A549 (cell line): ENCODE measurements at regions of chr19 and their contacts with region 1.

Region 1: DNA sequence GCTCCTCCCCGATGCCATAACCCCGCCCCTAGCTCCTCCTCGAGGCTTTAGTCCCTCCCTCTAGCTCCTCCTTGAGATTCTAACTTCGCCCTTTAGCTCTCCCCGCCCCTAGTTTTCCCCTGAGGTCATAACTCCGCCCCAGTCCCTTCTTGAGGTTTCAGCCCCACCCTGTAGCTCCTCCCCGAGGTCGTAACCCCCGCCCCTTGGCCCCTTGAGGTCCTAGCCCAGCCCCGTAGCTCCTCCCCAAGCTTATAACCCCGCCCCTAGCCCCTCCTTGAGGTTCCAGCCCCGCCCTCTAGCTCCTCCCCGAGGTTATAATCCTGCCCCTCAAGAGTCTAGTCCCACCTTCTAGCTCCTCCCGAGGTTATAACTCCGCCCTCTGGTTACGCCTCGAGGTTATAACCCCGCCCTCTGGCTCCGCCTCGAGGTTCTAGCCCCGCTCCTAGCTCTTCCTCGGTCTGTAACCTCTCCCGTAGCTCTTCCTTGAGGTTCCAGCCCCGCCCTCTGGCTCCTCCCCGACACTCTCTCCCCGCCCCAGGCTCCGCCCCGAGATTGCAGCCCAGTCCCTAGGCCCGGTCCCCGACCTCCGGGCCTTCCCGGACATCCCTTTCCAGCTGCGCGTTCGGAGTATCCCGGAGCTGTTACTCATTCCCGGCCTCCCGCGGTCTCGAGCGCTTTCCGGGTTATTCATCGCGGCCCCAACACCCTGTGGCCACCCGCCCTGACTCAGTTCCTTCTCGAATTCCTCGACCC is 1.4 kb downstream of the PLAUR start:
- DNase-seq: peak; percentile 99 to 100
- ATAC-seq: peak; percentile 87 to 95
- H3K4me3 ChIP-seq: peak overlapping the region; percentile 58
- H3K27ac ChIP-seq: peak overlapping the region; percentile 81 to 87
- H3K4me1 ChIP-seq: peaks cover 22% of the 10 kb centered on the region
- CTCF ChIP-seq: no peak
- EP300 ChIP-seq: no peak
- POLR2A ChIP-seq: peak; percentile 76
- RAD21 ChIP-seq: no peak

Region 2: GRCh38 chr19:43395561-43395960 is 273.0 kb before region 1 on chr19:
- CTCF ChIA-PET with region 1: no interaction called
- POLR2A ChIA-PET with region 1: no interaction called
- DNase-seq: no peak
- ATAC-seq: peak in 1 of 2 experiments; percentile 30; a peak in 3 of 6 replicates
- H3K4me3 ChIP-seq: no peak overlapping the region
- H3K27ac ChIP-seq: no peak overlapping the region
- H3K4me1 ChIP-seq: no peaks in the 10 kb centered on the region
- CTCF ChIP-seq: no peak
- EP300 ChIP-seq: no peak
- POLR2A ChIP-seq: no peak
- RAD21 ChIP-seq: no peak

Region 3: GRCh38 chr19:43618921-43619261 is 49.7 kb before region 1 on chr19:
- CTCF ChIA-PET with region 1: no interaction called
- POLR2A ChIA-PET with region 1: interaction called, 10 read pairs
- DNase-seq: peak; percentile 53 to 62
- ATAC-seq: peak; percentile 54 to 66
- H3K4me3 ChIP-seq: peak overlapping the region; percentile 65
- H3K27ac ChIP-seq: peak overlapping the region; percentile 86 to 94
- H3K4me1 ChIP-seq: peaks cover 12% of the 10 kb centered on the region
- CTCF ChIP-seq: no peak
- EP300 ChIP-seq: no peak
- POLR2A ChIP-seq: no peak
- RAD21 ChIP-seq: no peak

Region 4: GRCh38 chr19:43631491-43631890 is 37.1 kb before region 1 on chr19:
- CTCF ChIA-PET with region 1: no interaction called
- POLR2A ChIA-PET with region 1: no interaction called
- DNase-seq: no peak
- ATAC-seq: no peak
- H3K4me3 ChIP-seq: no peak overlapping the region
- H3K27ac ChIP-seq: no peak overlapping the region
- H3K4me1 ChIP-seq: peaks cover 24% of the 10 kb centered on the region
- CTCF ChIP-seq: no peak
- EP300 ChIP-seq: no peak
- POLR2A ChIP-seq: no peak
- RAD21 ChIP-seq: no peak

Region 5: GRCh38 chr19:43738780-43739211 is 70.2 kb after region 1 on chr19:
- CTCF ChIA-PET with region 1: interaction called, 18 read pairs
- POLR2A ChIA-PET with region 1: interaction called, 9 read pairs
- DNase-seq: peak in 1 of 2 experiments; percentile 45
- ATAC-seq: peak in 1 of 2 experiments; percentile 71; a peak in 3 of 6 replicates
- H3K4me3 ChIP-seq: no peak overlapping the region
- H3K27ac ChIP-seq: peak overlapping the region; percentile 60 to 73; a peak in 4 of 6 replicates
- H3K4me1 ChIP-seq: peaks cover 28% of the 10 kb centered on the region
- CTCF ChIP-seq: no peak
- EP300 ChIP-seq: no peak
- POLR2A ChIP-seq: no peak
- RAD21 ChIP-seq: no peak

Region 6: DNA sequence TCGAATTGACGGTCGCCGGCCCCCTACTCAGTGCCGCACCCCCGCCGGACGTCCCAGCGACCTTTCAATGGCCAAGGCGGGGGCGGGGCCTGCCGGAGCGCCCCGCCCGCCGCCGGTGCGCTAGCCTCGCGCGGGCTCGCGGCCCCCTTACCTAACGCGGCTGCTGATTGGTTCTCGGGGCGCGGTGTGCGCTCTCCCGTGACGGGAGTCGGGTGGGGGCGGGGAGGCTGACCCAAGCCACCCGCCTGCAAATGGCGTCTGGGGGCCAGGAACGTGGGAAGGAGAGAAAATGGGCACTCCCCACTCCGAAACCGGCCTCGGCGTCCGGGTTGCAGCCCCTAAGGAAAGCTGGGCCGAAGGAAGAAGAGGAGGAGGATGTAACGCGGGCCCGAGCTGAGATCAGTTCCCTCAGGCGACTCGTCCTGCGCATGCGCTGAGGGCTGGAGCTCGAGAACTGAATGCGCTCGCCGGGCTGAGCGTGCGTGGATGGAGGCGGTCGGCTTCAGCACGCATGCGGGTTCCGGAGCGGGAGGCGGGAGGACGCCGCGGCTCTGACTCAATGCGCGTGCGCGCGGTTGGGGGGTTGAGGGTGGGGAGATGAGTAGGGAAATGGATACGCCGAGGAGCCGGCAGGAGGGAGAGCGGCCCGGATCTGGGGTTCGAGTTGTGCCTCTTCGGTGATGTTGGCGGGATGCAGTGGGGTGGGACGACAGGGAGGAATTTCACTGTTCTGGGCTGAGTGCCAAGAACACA is 86.1 kb after region 1 on chr19 and contains the start of gene SMG9:
- CTCF ChIA-PET with region 1: interaction called, 9 read pairs
- POLR2A ChIA-PET with region 1: interaction called, 75 read pairs
- DNase-seq: peak; percentile 99
- ATAC-seq: peak; percentile 85 to 89
- H3K4me3 ChIP-seq: peak within 1 kb of the TSS; percentile 75
- H3K27ac ChIP-seq: peak within 1 kb of the TSS; percentile 94 to 99
- H3K4me1 ChIP-seq: peaks cover 61% of the 10 kb centered on the region
- CTCF ChIP-seq: no peak
- EP300 ChIP-seq: 0 out of 5 replicates have a peak, but pooled peaks of 1 of the 2 experiments have one; percentile 12
- POLR2A ChIP-seq: peak; percentile 61
- RAD21 ChIP-seq: no peak; a peak in 1 of 5 replicates
- polyA plus RNA-seq, gene SMG9: 14.2 and 24.4 TPM in 2 replicates

Region 7: DNA sequence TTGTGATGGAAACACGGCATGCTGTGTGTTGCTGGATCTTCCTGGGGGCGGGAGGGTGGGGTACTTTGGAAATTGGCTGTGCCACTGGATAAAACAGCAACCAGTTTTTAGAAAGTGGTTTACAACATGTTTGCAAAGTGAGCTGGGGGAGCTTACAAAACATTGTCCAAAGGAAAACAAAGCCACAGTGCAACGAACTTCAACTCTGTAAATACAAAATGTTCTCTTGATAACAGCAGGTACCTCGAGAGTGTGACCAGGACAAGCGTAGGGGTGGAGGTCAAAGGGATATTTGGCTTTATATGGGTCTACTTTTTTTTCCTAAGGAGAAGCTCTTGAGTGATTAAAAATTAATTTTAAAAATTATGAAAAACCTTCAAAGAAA is 947.3 kb after region 1 on chr19:
- CTCF ChIA-PET with region 1: no interaction called
- POLR2A ChIA-PET with region 1: interaction called, 10 read pairs
- DNase-seq: no peak
- ATAC-seq: no peak
- H3K4me3 ChIP-seq: no peak overlapping the region
- H3K27ac ChIP-seq: peak overlapping the region; percentile 2 to 34; a peak in 3 of 6 replicates
- H3K4me1 ChIP-seq: peaks cover 25% of the 10 kb centered on the region; the same call in 2 of the 3 replicates
- CTCF ChIP-seq: no peak
- EP300 ChIP-seq: no peak
- POLR2A ChIP-seq: no peak
- RAD21 ChIP-seq: no peak